ENCODE measurements at regions of chr14 and their contacts with region 1.

Region 1: GRCh38 chr14:73491256-73492042 is 716 bp downstream of the RIOX1 start:
- DNase-seq: peak; percentile 89
- H3K4me3 ChIP-seq: peak overlapping the region; percentile 85 to 99 (median 92)
- H3K27ac ChIP-seq: peak overlapping the region; percentile 84 to 93 (median 90)
- H3K4me1 ChIP-seq: peaks cover 23 to 60% (median 37%) of the 10 kb centered on the region in 6 donors
- H3K27me3 ChIP-seq: no peaks in the 10 kb centered on the region
- CTCF ChIP-seq: no peak
- POLR2A ChIP-seq: no peak

Region 2: GRCh38 chr14:72745991-72746980 is 745.2 kb before region 1 on chr14:
- intact Hi-C with region 1: no loop called
- DNase-seq: no peak
- H3K4me3 ChIP-seq: no peak overlapping the region
- H3K27ac ChIP-seq: no peak overlapping the region
- H3K4me1 ChIP-seq: no peaks in the 10 kb centered on the region
- H3K27me3 ChIP-seq: no peaks in the 10 kb centered on the region
- CTCF ChIP-seq: no peak
- POLR2A ChIP-seq: no peak

Region 3: GRCh38 chr14:74029136-74029535 is 537.7 kb after region 1 on chr14:
- intact Hi-C with region 1: loop called (anchors 5 kb)
- DNase-seq: no peak
- H3K4me3 ChIP-seq: no peak overlapping the region
- H3K27ac ChIP-seq: no peak overlapping the region
- H3K4me1 ChIP-seq: no peaks in the 10 kb centered on the region
- H3K27me3 ChIP-seq: no peaks in the 10 kb centered on the region
- CTCF ChIP-seq: no peak
- POLR2A ChIP-seq: no peak

Measured in spleen (tissue), 13 donors.